Sigmoid colon (tissue), 7 donors: ENCODE measurements at regions of chr2 and their contacts with region 1.

Region 1: DNA sequence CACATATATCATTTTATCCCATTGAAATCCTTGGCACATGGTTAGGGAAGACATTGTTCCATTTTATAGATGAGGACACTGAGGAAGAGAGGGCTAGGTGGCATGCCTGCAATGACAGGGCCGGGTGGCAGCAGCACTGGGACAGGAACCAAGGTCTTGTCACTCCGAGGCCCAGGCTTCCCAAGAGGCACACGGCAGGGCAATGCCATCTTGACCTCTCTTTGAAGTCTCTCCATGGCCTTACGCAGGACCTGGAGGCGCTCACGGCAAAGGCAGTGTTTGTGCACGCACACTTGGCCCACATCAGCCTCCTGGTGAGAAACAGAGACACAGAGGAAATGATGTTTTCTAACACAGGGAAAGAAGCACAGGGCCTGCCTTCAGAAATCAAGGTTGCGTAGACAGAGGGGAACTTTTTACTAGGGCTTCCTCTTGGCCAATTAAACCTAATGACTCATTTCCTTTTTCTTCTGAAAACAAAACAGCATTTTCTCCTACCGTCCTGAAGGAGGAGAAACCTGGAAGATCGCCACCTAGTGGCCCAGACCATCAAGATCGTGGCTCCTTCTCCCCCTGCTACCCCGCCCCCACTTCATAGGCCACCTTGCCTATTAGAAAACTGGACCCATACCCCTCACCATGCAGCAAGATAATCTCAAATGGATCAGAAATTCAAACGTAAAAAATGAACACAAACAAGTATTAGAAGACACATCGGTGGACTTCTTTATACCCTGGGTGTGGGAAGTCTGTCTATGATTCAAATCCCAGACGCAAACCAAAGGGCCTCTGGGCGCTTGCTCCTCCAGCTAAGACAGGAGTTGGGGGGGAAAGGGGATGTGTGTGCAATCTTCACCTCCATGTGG is 74.6 kb upstream of the SP3 start:
- DNase-seq: peak; percentile 95
- H3K4me3 ChIP-seq: peak overlapping the region in 3 of 4 donors; percentile 24 to 36 (median 26)
- H3K27ac ChIP-seq: peak overlapping the region; percentile 78 to 82 (median 78)
- H3K4me1 ChIP-seq: peaks cover 0 to 5% (median 4%) of the 10 kb centered on the region in 4 donors
- H3K27me3 ChIP-seq: no peaks in the 10 kb centered on the region
- CTCF ChIP-seq: peak; percentile 81 to 85 (median 82)
- EP300 ChIP-seq: peak in 1 of 4 donors; percentile 26
- POLR2A ChIP-seq: no peak

Region 2: GRCh38 chr2:173402405-173402974 is 637.3 kb before region 1 on chr2:
- intact Hi-C with region 1: loop called (anchors 10 kb)
- DNase-seq: peak; percentile 89
- H3K4me3 ChIP-seq: peak overlapping the region in 2 of 4 donors; percentile 20 to 29
- H3K27ac ChIP-seq: no peak overlapping the region
- H3K4me1 ChIP-seq: peaks cover 0 to 15% (median 9%) of the 10 kb centered on the region in 4 donors
- H3K27me3 ChIP-seq: peaks cover 3 to 57% (median 16%) of the 10 kb centered on the region in 3 donors
- CTCF ChIP-seq: peak; percentile 77 to 84 (median 82)
- EP300 ChIP-seq: no peak
- POLR2A ChIP-seq: no peak

Region 3: DNA sequence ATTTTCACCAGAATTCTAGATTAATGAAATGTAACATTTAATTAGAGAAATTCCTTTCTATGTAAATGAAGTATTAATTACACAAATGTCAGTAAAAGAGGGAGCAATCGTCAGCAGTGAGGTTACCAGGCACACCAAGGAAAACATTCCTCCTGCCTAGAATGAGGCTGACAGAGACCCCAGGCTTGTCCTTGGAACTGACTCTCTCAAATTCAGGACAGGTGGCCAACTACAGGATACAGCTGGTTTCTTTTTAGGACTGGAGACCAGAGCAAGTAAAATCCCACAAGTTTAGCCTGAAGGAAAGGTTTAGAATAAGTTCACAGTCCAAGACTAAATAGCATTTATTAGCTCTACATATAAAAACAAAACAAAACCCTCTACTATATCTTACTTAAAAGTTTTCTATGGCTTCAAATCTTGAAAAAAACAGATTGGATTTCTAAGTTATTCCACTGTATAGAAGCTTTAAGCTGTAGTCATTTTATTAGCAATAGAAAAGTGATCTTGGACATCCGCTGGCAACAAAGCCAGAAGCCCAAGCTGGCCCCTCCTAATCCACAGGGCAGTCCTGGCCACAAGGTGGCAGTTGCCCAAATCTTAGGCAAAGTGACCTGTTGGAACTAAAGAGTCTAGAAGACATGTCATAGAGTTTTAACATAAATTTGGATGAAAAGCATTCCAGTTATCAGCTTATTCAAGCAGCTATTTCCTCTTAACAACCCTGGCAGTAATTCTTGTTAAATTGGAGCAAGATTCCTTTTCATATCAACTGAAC is 155.6 kb before region 1 on chr2:
- intact Hi-C with region 1: loop called (anchors 2 kb)
- DNase-seq: peak; percentile 70
- H3K4me3 ChIP-seq: no peak overlapping the region
- H3K27ac ChIP-seq: no peak overlapping the region
- H3K4me1 ChIP-seq: no peaks in the 10 kb centered on the region
- H3K27me3 ChIP-seq: peaks cover 0 to 1% (median 0%) of the 10 kb centered on the region in 3 donors
- CTCF ChIP-seq: peak in 3 of 4 experiments; percentile 11 to 57 (median 32)
- EP300 ChIP-seq: no peak
- POLR2A ChIP-seq: no peak